ENCODE measurements at regions of chr11 and their contacts with region 1.

Region 1: DNA sequence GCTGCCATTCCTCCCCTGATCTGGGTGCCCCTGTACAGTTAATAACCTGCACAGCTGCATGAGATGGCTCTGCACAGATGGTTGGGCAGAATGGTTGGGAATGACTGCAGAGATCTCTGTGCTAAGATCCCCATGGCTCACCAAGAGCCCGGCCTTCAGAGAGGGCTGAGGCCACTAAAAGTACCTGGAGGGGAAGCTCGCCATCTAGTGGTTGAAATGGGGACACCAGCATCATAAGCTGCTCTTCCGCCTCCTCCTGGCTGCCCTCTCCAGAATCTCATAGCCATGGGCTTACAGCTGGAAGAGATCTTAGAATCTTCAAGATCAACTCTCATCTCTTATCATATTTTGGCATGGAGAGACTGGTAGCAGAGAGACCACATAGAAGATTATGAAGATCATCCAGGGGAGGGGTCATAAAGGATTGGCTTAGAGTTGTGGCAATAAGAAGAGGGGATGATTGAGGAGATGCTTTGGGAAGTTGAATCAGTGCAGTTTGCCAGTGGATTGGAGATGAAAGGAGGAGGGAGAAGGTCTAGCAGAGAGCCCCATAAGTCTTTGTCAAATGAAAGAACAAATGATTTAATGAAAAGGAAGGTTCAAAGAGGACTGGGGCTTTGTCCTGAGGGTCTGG is 22.0 kb upstream of the TLCD5 start:
- DNase-seq: peak; percentile 71
- H3K4me3 ChIP-seq: no peak overlapping the region
- H3K27ac ChIP-seq: no peak overlapping the region
- H3K4me1 ChIP-seq: no peaks in the 10 kb centered on the region
- CTCF ChIP-seq: peak; percentile 96

Region 2: DNA sequence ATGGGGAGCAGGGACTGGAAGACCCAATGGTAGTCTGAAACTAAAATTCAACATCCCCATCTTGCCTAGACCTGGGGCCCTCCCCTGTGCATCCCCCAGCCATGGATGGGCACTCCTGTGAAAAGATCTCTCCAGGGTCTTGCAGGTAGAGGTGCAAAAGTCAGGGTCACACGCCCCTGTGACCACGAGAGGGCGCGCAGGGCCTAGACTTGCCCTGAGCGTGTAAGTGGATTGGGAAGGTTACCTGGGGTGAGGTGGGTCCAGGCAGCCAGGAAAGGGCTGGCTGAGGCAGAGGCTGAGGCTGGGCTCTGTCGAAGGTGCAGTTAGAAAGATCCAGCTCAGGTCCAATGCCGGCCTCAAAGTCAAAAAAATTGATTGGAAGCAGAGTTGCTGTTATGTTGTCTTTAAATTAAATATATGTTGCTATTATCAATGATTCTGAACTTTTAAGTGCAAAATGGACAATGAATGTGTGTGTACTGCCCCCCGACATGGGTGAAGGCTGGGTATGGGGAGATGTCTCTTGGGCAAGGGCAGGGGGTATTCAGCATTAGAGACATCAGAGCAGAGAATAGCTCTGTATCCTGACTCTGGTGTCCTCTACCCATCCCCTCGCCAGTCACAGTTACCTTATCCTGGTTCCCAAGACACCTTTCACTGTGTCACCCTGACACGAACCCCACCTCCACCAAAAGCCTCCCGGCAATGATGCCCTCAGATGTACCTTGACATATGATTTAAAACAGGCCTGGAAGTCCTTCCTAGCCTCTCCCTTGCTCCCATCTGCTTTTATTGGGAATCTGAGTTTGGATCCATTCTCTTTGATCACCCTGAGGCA is 67.9 kb before region 1 on chr11:
- CTCF ChIA-PET with region 1: interaction called, 5 read pairs
- POLR2A ChIA-PET with region 1: no interaction called
- intact Hi-C with region 1: loop called (anchors 1 kb)
- DNase-seq: peak; percentile 66
- H3K4me3 ChIP-seq: no peak overlapping the region
- H3K27ac ChIP-seq: no peak overlapping the region
- H3K4me1 ChIP-seq: no peaks in the 10 kb centered on the region
- CTCF ChIP-seq: peak; percentile 90

Region 3: GRCh38 chr11:120268686-120269085 is 34.4 kb before region 1 on chr11:
- CTCF ChIA-PET with region 1: no interaction called
- POLR2A ChIA-PET with region 1: no interaction called
- intact Hi-C with region 1: no loop called
- DNase-seq: no peak
- H3K4me3 ChIP-seq: no peak overlapping the region
- H3K27ac ChIP-seq: no peak overlapping the region
- H3K4me1 ChIP-seq: no peaks in the 10 kb centered on the region
- CTCF ChIP-seq: no peak

Measured in OCI-LY7 (cell line).